HEK293T (cell line): ENCODE measurements at regions of chr4 and their contacts with region 1.

Region 1: DNA sequence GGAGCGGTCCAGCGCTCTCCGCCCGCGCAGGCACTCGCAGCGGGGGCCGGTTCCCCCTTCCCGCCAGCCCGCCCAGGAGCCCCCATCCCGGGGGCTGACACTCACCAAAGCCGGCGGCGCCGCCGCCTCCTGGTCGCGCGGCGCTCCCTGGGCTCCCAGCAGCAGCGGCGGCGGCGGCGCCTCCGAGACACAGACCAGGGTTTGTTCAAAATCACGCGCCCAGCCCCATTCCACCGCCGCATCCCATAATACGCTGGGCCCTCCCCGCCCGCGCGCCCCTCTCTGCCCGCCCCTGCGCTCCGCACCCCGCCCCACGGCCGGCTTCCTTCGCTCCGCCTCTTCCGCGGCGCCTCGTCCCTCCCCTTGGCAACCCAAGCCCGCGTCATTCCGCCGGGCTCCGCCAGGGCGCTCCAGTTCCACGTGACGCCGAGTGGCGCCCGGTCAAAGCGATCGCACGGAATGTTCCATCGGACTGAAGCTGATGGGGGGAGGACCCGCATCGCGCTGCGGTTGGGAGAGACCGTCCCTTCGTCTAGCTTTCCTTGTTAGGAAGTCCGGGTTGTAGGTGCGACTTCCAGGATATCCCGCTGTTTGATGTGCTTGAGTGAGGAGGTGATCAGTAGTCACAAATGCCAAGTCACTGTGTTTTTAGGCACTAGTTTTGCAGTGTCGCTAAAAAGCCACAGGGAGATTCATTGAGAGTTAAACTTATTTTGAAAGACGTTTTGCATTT is 2.2 kb upstream of the LIN54 start:
- DNase-seq: peak; percentile 94

Region 2: GRCh38 chr4:82753725-82754410 is 259.0 kb before region 1 on chr4:
- CTCF ChIA-PET with region 1: no interaction called
- POLR2A ChIA-PET with region 1: no interaction called
- DNase-seq: no peak

Region 3: DNA sequence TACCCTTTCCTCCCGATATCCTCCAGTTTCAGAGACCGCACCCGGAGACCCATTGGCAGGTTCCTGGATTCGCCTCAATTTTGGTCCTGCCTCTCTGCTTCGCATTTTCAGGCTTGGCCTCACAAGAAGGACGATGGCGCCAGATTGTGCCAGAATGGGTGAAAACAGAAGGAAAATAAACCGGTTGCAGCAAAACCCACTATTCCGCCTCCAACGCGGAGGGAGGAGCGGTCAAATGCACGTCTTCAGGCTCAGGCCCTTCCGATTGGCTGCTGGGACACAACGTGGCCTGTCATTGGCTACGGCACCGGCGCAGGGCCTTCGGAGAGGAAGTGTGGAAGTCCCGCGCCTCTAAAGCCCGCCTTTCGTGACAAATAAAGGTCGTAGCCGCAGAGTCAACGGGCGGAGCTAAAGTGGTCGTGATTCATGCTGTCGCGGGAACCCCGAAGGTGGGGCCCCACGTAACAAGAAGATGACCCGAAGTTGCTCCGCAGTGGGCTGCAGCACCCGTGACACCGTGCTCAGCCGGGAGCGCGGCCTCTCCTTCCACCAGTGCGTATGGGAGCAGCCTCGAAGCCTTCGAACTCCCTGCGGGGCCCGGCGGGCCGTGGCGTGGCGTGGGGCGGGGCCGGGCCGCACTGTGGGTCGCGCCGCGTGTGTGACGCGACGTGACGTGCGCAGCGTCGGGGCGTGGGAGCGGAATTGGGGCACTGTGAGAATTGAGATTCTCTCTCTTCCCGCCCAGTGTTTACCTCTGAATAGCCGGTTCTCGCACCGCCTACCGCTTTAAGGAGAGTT is 112.3 kb before region 1 on chr4 and contains the start of gene THAP9:
- CTCF ChIA-PET with region 1: no interaction called
- POLR2A ChIA-PET with region 1: interaction called, 16 read pairs
- DNase-seq: peak; percentile 88

Region 4: DNA sequence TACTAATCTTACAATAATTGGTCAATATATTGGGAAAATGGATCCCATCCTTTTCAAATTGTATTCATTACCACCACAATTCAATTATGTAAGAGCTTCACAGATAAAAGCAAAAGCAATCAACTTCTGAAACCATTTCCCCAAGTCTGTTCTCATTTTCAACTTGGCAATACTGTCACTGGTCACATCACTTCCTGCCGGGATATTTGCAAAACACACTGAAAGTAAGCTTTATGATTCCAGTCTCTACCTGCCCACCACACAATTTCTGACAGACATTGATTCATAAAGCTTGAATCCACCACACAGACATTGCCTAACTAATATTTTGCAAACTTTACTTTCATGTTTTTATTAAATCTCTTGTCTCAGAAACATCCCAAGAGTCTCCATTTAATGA is 55.8 kb before region 1 on chr4:
- CTCF ChIA-PET with region 1: no interaction called
- POLR2A ChIA-PET with region 1: no interaction called
- DNase-seq: no peak

Region 5: DNA sequence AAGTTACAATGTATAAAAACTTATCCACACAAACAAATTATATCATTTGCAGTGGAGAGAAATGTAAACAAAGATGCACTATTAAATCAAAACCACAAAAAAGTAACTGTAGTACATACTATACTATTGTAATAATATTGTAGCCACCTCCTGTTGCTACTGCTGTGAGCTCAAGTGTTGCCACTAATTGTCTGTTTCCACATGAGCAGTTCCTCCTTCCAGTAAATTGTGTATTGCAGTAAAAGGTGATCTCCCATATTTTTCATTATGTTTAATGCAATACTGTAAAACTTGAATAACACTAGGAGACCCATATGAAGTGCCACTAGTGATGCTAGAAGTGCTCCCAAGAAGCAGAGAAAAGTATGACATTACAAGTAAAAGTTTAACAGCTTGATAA is 14.0 kb before region 1 on chr4:
- CTCF ChIA-PET with region 1: interaction called, 3 read pairs
- POLR2A ChIA-PET with region 1: interaction called, 17 read pairs
- DNase-seq: no peak

Region 6: DNA sequence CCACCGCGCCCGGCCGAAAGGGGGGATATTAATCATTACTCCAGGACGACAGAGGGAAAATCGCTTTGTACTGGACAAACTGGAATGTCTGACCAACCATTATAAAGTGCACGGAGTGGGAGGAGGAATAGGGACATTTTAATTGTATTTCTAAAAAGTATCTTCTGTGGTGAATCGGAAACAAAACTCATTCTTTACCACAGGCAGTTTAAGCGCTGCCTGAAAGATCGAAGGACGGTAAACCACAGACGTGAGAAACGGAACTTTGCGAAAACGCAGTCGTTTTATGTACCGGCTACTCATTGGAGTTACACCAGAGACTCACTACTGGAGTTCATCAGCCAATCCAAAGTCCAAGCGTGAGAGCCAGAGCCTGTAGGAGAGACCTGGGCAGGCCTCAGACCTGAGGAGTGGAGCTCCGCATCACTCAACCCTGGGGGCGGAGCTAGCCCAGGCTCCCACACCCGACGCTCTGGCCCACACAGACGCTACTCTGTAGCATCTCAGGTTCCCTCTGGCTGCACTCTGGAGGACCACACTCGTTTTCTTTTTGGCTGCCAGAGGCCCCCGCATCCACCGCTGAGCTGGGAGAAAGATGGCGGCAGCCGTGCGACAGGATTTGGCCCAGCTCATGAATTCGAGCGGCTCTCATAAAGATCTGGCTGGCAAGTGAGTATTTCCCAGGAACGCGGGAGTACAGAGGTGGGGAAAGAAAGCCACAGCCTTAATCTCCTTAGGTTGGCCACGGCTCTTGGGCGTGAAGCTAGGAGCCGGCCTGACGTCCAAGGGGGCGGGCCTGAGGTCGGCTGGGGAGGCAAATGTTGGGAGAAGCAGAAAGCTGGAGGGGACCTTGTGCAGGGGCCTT is 22.0 kb after region 1 on chr4 and contains the start of gene COPS4:
- CTCF ChIA-PET with region 1: no interaction called
- POLR2A ChIA-PET with region 1: interaction called, 59 read pairs
- DNase-seq: peak; percentile 96